Activated CD4-positive, alpha-beta T cell treated with anti-CD3 and anti-CD28 coated beads, Interleukin-2, amount 10 ng/mL, durations not matched to agents 24 days and 14 days (primary cell): ENCODE measurements at regions of chr7 and their contacts with region 1.

Region 1: GRCh38 chr7:127751490-127752448 is 99.8 kb downstream of the SND1 start:
- DNase-seq: no peak
- H3K4me3 Mint-ChIP-seq: no peak overlapping the region
- H3K27ac Mint-ChIP-seq: peak overlapping the region; percentile 21
- H3K4me1 Mint-ChIP-seq: peaks cover 31% of the 10 kb centered on the region
- H3K27me3 Mint-ChIP-seq: no peaks in the 10 kb centered on the region

Region 2: DNA sequence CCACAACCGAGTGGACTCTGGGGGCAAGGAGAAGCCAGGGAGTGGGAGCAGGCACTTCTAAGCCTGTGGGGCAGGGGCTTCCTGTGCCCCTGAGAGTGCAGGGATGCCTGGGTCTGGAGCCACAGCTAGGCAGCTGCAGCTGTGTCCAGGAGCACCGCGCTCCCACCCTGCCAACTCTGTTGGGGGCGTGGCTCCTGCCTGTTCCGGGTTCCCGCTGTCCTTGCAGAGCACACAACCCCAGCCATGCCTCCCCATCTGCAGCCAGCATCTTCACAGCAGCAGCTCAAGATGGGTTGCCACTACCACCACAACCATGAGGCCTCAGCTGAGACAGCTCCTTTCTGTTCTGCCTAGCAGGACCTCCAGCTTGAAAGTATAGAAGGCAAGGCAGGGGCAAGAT is 142.5 kb before region 1 on chr7:
- intact Hi-C with region 1: no loop called
- DNase-seq: no peak
- H3K4me3 Mint-ChIP-seq: no peak overlapping the region
- H3K27ac Mint-ChIP-seq: no peak overlapping the region
- H3K4me1 Mint-ChIP-seq: no peaks in the 10 kb centered on the region
- H3K27me3 Mint-ChIP-seq: no peaks in the 10 kb centered on the region

Region 3: GRCh38 chr7:127651556-127652332 is 100.0 kb before region 1 on chr7 and contains the start of gene SND1:
- intact Hi-C with region 1: no loop called
- DNase-seq: peak; percentile 100
- H3K4me3 Mint-ChIP-seq: peak within 1 kb of the TSS; percentile 99
- H3K27ac Mint-ChIP-seq: peak within 1 kb of the TSS; percentile 97
- H3K4me1 Mint-ChIP-seq: peaks cover 31% of the 10 kb centered on the region
- H3K27me3 Mint-ChIP-seq: peaks cover 6% of the 10 kb centered on the region
- total RNA-seq, gene SND1: 275 and 295 TPM in 2 replicates

Region 4: GRCh38 chr7:127717502-127718339 is 34.0 kb before region 1 on chr7:
- intact Hi-C with region 1: loop called (anchors 5 kb)
- DNase-seq: no peak
- H3K4me3 Mint-ChIP-seq: no peak overlapping the region
- H3K27ac Mint-ChIP-seq: peak overlapping the region; percentile 55
- H3K4me1 Mint-ChIP-seq: peaks cover 28% of the 10 kb centered on the region
- H3K27me3 Mint-ChIP-seq: no peaks in the 10 kb centered on the region

Region 5: DNA sequence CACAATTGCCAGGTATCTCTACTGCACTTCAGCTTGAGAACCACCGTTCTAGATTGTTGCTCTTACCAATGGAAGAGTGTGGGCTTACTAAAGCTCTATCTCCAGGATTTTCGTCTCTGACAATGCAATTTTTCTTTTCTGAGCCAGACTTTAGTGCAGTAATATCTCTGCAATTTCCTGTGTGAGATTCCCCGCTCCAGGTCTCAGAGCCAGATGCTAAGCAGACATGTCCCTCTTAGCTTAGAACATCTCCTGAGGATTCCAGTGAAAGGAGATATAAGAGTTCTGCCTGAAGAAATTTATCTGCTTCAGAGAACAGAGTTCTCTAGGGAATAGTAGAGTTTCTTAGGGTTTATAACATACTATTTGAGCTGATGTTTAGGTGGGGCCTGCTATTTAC is 17.8 kb before region 1 on chr7:
- intact Hi-C with region 1: no loop called
- DNase-seq: no peak
- H3K4me3 Mint-ChIP-seq: no peak overlapping the region
- H3K27ac Mint-ChIP-seq: no peak overlapping the region
- H3K4me1 Mint-ChIP-seq: peaks cover 1% of the 10 kb centered on the region
- H3K27me3 Mint-ChIP-seq: no peaks in the 10 kb centered on the region

Region 6: DNA sequence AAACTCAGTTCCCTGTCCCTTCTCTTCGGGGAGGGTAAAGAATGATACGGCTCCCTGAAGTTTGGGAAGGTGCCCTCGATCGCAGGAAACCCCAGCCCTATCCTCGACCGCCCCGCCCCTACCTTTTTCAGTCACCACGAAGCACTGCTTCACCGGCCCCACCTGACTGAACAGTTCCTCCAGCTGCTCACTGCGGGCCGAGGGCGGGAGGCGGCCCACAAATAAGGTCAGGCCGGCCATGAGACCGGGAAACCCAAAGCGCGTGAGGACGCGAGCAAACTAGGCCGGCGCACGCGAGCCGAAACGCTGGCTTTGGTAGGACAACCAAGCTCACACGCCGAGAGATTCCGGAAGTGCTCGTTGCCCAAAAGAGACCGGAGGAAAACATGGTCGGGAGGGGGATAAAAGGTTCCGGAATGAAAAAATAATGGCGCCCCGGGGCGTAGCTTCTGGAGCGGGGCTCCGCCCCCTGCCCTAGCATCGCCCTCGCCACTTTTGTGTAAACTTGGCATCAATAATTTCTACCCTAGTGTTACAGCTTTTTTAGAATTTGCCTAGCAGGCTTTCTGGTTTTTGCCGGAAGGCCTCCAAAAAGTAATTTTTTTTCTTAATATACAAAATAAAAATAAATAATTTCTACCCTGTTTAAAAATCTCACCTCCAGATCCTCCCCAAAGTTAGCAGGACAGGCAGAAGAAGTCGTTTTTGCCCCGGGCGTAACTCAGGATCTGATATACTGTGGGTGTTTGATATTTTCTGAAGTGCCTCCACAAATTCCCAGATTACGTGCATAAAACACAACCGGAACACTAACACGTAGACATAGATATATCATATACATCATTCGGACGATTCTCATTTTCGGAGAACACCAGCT is 592.0 kb after region 1 on chr7 and contains the start of gene RBM28:
- intact Hi-C with region 1: no loop called
- DNase-seq: peak; percentile 96
- H3K4me3 Mint-ChIP-seq: peak within 1 kb of the TSS; percentile 98
- H3K27ac Mint-ChIP-seq: peak within 1 kb of the TSS; percentile 96
- H3K4me1 Mint-ChIP-seq: peaks cover 26% of the 10 kb centered on the region
- H3K27me3 Mint-ChIP-seq: peaks cover 15% of the 10 kb centered on the region
- total RNA-seq, gene RBM28: 76.7 and 85.8 TPM in 2 replicates